Activated B cell treated with CpG ODN at 0.5 μM for 24 hours (primary cell): ENCODE measurements at regions of chr2 and their contacts with region 1.

Region 1: GRCh38 chr2:218301176-218301819 is 9.0 kb upstream of the TMBIM1 start:
- DNase-seq: peak; percentile 61
- ATAC-seq: peak; percentile 99
- H3K4me3 Mint-ChIP-seq: no peak overlapping the region
- H3K27ac Mint-ChIP-seq: peak overlapping the region; percentile 53
- H3K4me1 Mint-ChIP-seq: peaks cover 8% of the 10 kb centered on the region
- H3K27me3 Mint-ChIP-seq: no peaks in the 10 kb centered on the region
- CTCF ChIP-seq: no peak

Region 2: DNA sequence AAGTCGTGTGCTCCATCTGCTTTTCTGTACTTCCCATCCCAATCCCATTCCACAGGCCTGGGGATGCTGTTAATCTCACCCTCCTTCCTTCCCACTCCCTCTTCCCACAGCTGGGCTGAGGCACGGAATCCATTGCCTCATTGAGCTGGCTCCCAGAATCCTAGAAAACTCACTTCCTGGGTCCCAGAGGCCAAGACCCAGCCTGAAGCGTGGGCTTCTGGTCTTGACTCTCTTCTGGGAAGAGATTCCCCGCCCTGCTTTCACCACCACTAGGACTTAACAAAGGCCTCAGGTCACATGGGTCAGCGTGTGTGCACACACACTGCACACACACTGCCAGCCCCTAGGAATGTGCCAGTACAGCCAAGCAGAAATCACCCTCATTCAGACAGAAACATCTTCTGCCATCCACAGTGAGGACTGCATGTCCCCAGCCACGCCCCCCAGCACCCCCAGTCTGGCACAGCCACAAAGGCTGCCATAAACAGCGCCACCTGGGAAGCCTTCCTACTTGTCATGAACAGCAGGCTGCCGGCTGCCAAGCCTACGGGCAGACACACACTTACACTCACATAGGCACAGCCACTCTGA is 464.3 kb before region 1 on chr2:
- CTCF ChIA-PET with region 1: no interaction called
- POLR2A ChIA-PET with region 1: no interaction called
- intact Hi-C with region 1: no loop called
- DNase-seq: no peak
- ATAC-seq: no peak
- H3K4me3 Mint-ChIP-seq: no peak overlapping the region
- H3K27ac Mint-ChIP-seq: no peak overlapping the region
- H3K4me1 Mint-ChIP-seq: no peaks in the 10 kb centered on the region
- H3K27me3 Mint-ChIP-seq: peaks cover 8% of the 10 kb centered on the region
- CTCF ChIP-seq: no peak

Region 3: GRCh38 chr2:218312267-218312756 is 11.0 kb after region 1 on chr2:
- CTCF ChIA-PET with region 1: no interaction called
- POLR2A ChIA-PET with region 1: no interaction called
- intact Hi-C with region 1: no loop called
- DNase-seq: no peak
- ATAC-seq: no peak
- H3K4me3 Mint-ChIP-seq: no peak overlapping the region
- H3K27ac Mint-ChIP-seq: no peak overlapping the region
- H3K4me1 Mint-ChIP-seq: peaks cover 5% of the 10 kb centered on the region
- H3K27me3 Mint-ChIP-seq: no peaks in the 10 kb centered on the region
- CTCF ChIP-seq: no peak

Region 4: DNA sequence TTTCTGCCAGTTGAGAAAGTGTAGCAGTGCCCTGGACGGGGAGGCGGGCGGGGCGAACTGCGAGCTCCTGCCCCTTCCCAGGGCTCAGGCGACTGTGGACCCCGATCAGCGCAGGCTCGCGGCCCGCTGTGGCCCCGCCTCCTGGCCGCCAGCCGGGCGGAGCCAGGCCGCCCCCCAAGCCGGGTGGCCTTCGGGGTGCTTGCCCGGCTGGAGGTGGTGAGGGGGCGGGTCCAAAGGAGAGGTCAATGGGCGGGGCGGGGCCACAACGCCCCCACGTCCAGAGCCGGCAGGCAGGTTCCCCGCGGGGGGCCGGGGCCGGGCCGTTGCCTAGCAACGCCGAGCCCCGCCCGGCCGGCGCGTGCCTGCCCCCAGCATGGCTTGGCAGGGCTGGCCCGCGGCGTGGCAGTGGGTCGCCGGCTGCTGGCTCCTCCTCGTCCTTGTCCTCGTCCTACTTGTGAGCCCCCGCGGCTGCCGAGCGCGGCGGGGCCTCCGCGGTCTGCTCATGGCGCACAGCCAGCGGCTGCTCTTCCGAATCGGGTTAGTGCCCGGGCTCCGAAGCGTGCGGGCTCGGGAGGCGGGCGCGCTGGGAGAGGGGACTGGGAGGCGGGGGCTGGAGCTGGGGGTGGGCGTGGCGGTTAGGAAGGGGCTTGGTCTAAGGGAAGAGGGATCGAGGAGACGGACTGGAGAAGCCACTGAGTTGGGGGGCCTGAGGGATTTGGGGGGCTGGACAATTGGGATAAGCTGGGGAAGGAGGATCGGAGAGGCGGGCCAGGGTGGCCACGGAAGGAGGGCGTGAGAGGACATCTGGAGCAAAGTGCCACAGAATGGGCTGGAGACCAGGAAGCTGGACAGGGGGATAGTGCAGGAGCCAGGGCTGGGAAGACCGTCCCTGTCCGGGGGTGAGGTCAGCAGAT is 21.9 kb after region 1 on chr2:
- CTCF ChIA-PET with region 1: interaction called, 5 read pairs
- POLR2A ChIA-PET with region 1: no interaction called
- intact Hi-C with region 1: loop called (anchors 2 kb)
- DNase-seq: peak; percentile 65
- ATAC-seq: peak; percentile 74
- H3K4me3 Mint-ChIP-seq: peak overlapping the region; percentile 81
- H3K27ac Mint-ChIP-seq: peak overlapping the region; percentile 61
- H3K4me1 Mint-ChIP-seq: peaks cover 42% of the 10 kb centered on the region
- H3K27me3 Mint-ChIP-seq: peaks cover 7% of the 10 kb centered on the region
- CTCF ChIP-seq: no peak

Region 5: GRCh38 chr2:218360447-218360846 is 59.1 kb after region 1 on chr2:
- CTCF ChIA-PET with region 1: interaction called, 54 read pairs
- POLR2A ChIA-PET with region 1: no interaction called
- intact Hi-C with region 1: loop called (anchors 1 kb)
- DNase-seq: no peak
- ATAC-seq: no peak
- H3K4me3 Mint-ChIP-seq: no peak overlapping the region
- H3K27ac Mint-ChIP-seq: peak overlapping the region; percentile 25
- H3K4me1 Mint-ChIP-seq: peaks cover 11% of the 10 kb centered on the region
- H3K27me3 Mint-ChIP-seq: no peaks in the 10 kb centered on the region
- CTCF ChIP-seq: no peak

Region 6: DNA sequence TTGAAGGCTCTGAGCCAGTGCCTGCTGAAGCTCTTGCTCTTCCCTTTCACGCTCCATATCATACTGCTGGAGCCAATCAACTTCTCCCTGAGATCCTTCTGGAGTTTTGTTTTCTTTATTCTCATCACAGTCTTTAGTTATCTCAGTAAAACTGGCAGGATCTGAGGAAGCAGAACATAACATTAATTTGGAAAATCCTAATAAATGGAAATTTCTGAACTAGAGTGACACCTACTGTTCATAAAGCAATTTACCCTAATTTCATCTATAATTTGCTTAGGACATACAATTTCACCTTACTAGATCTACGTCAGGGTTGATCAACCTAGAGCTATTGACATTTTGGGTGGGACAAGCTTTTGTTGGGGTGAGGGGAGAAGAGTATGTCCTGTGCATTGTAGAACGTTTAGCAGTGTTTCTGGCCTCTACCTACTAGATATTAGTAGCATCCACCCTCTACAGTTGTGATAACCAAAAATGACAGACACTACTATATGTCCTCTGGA is 164.8 kb after region 1 on chr2:
- CTCF ChIA-PET with region 1: no interaction called
- POLR2A ChIA-PET with region 1: no interaction called
- intact Hi-C with region 1: loop called (anchors 1 kb)
- DNase-seq: no peak
- ATAC-seq: no peak
- H3K4me3 Mint-ChIP-seq: no peak overlapping the region
- H3K27ac Mint-ChIP-seq: peak overlapping the region; percentile 8
- H3K4me1 Mint-ChIP-seq: peaks cover 17% of the 10 kb centered on the region
- H3K27me3 Mint-ChIP-seq: no peaks in the 10 kb centered on the region
- CTCF ChIP-seq: no peak